ENCODE measurements at regions of chr4 and their contacts with region 1.

Region 1: GRCh38 chr4:168923526-168924194 is 86.4 kb downstream of the CBR4 start:
- DNase-seq: peak in 1 of 2 donors; percentile 41
- H3K4me3 ChIP-seq: no peak overlapping the region
- CTCF ChIP-seq: peak in 1 of 3 donors; percentile 36
- POLR2A ChIP-seq: no peak

Region 2: DNA sequence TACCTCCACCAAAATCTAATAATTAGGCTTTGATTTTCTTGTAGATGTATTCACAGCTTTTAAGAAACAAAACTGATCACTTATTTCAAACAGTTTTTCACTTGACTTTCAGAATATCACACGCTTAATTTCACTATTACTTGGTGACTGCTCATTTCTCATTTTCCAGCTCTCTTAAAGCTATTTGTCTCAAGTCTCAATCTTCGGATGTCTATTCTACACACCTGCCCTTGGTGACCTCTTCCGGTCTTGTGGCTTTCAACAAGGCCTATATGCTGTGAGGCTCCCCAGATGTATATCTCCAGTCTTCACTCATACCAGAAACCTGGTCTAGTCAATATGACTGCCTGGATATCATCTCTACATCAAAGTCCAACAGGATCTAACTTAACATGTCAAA is 866.2 kb before region 1 on chr4:
- intact Hi-C with region 1: no loop called
- DNase-seq: no peak
- H3K4me3 ChIP-seq: no peak overlapping the region
- CTCF ChIP-seq: no peak
- POLR2A ChIP-seq: no peak

Region 3: DNA sequence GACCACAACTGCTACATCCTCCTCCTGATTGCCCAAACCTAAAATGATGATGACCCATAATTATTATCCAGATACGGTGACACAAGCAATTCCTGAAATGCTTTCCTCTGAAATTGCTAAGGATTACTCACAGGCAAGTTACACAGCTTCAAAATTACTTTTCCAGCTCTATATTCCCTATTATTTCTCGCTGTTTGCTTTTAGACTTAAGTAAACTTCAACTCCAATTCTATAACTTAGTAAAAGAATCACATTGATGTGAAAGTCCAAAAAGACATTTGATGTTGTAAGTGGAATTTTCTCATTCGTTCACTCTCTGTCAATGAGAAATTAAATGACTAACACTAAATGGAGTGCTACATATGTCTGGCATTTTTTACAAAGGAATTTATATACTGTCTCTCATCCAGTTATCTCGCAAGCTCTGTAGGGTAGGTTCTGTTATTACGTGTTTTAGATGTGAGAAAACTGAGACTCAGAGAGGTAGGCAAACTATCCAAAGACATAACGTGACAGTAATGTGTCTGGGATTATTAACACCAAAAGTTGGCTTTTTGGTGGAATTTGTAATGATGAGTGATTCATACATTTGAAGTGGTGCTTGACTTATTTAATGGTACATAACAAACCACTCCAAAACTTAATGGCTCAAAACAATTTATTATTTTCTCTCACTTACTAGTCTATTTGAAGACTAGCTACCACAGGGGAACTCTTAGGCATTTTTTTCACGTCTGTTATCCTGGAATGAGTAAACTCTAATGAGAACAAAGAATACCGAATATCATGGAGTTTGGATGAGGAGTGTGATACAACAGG is 395.3 kb before region 1 on chr4:
- intact Hi-C with region 1: no loop called
- DNase-seq: no peak
- H3K4me3 ChIP-seq: no peak overlapping the region
- CTCF ChIP-seq: no peak
- POLR2A ChIP-seq: no peak

Region 4: GRCh38 chr4:168731006-168731636 is 192.5 kb before region 1 on chr4:
- intact Hi-C with region 1: no loop called
- DNase-seq: no peak
- H3K4me3 ChIP-seq: no peak overlapping the region
- CTCF ChIP-seq: no peak
- POLR2A ChIP-seq: no peak

Region 5: GRCh38 chr4:169009286-169010124 is 85.8 kb after region 1 on chr4:
- intact Hi-C with region 1: loop called (anchors 10 kb)
- DNase-seq: peak; percentile 62 to 93
- H3K4me3 ChIP-seq: peak overlapping the region; percentile 31
- CTCF ChIP-seq: peak in 1 of 3 donors; percentile 11
- POLR2A ChIP-seq: no peak

Region 6: GRCh38 chr4:169485791-169486742 is 562.4 kb after region 1 on chr4:
- intact Hi-C with region 1: loop called (anchors 5 kb)
- DNase-seq: no peak
- H3K4me3 ChIP-seq: no peak overlapping the region
- CTCF ChIP-seq: no peak
- POLR2A ChIP-seq: no peak

Region 7: GRCh38 chr4:169802873-169803272 is 879.2 kb after region 1 on chr4:
- intact Hi-C with region 1: no loop called
- DNase-seq: no peak
- H3K4me3 ChIP-seq: no peak overlapping the region
- CTCF ChIP-seq: no peak
- POLR2A ChIP-seq: no peak

Measured in lower leg skin (tissue), 4 donors.